ENCODE measurements at regions of chr4 and their contacts with region 1.

Region 1: GRCh38 chr4:158996669-158997074 is 106.2 kb upstream of the RAPGEF2 start:
- DNase-seq: no peak
- H3K4me3 ChIP-seq: no peak overlapping the region
- H3K27ac ChIP-seq: no peak overlapping the region
- H3K4me1 ChIP-seq: no peaks in the 10 kb centered on the region
- H3K27me3 ChIP-seq: no peaks in the 10 kb centered on the region
- CTCF ChIP-seq: no peak
- POLR2A ChIP-seq: no peak

Region 2: DNA sequence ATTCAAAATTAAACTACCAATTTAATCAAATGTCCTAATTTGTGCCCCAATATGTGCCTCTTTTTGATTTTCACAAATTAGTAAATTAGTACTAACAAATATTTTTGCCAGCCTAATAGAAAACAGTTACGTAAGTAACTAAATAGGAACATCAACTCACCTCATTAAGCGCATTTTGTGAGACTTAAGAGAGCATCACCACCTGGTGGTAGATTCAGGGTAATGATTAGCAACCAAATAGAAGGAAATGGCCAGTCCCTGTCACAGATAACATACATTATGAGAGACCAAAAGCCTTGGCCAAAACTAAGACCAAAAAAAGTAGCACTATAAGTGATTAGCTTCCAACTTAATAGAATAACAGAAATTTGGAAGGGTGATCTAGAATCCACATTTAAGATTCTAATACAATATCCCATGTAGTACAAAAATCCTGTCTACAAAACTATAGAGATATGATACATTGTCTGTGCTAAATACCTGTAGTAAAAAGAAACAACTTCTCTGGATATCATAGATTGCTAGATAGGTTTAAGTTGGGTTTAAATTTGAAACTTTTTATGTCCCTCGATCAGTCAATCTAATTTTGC is 371.7 kb before region 1 on chr4:
- intact Hi-C with region 1: no loop called
- DNase-seq: no peak
- H3K4me3 ChIP-seq: no peak overlapping the region
- H3K27ac ChIP-seq: no peak overlapping the region
- H3K4me1 ChIP-seq: no peaks in the 10 kb centered on the region
- H3K27me3 ChIP-seq: no peaks in the 10 kb centered on the region
- CTCF ChIP-seq: peak; percentile 66 to 79 (median 68)
- POLR2A ChIP-seq: no peak

Region 3: GRCh38 chr4:158778156-158778711 is 218.4 kb before region 1 on chr4:
- intact Hi-C with region 1: loop called (anchors 5 kb)
- DNase-seq: no peak
- H3K4me3 ChIP-seq: no peak overlapping the region
- H3K27ac ChIP-seq: no peak overlapping the region
- H3K4me1 ChIP-seq: no peaks in the 10 kb centered on the region
- H3K27me3 ChIP-seq: no peaks in the 10 kb centered on the region
- CTCF ChIP-seq: no peak
- POLR2A ChIP-seq: no peak

Measured in breast epithelium (tissue), 4 donors.